CD4-positive, alpha-beta memory T cell (primary cell): ENCODE measurements at regions of chr2 and their contacts with region 1.

Region 1: DNA sequence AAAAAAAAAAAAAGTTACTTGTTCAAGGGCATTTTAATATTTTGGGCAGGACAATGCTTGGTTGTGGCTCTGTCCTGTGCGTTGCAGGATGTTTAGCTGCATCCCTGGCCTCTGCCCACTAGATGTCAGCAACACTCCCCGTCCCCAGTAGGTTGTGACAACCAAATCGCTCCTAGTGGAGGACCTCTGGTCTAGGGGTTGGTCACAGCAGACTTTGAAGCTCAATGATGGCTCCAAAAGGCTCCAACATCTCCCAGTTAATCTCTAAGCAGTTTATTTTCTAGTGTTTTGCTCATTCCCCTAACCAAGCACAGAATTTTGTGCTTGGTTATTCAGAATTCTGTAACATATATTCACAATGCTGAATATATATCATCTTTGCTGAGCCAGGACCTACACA is 67.0 kb downstream of the CHRNA1 start:
- DNase-seq: peak; percentile 44 to 57 (median 54)
- H3K4me3 ChIP-seq: no peak overlapping the region
- H3K4me3 Mint-ChIP-seq: no peak overlapping the region
- H3K27ac ChIP-seq: no peak overlapping the region
- H3K27ac Mint-ChIP-seq: no peak overlapping the region
- H3K4me1 ChIP-seq: no peaks in the 10 kb centered on the region
- H3K4me1 Mint-ChIP-seq: peaks cover 0 to 5% (median 4%) of the 10 kb centered on the region in 4 donors
- H3K27me3 ChIP-seq: no peaks in the 10 kb centered on the region
- H3K27me3 Mint-ChIP-seq: peaks cover 3 to 4% of the 10 kb centered on the region in 2 donors

Region 2: GRCh38 chr2:174577967-174578589 is 119.2 kb before region 1 on chr2:
- CTCF ChIA-PET with region 1: interaction called, 32 read pairs
- POLR2A ChIA-PET with region 1: interaction called, 3 read pairs
- intact Hi-C with region 1: no loop called
- DNase-seq: peak; percentile 63 to 77 (median 67)
- H3K4me3 ChIP-seq: no peak overlapping the region
- H3K4me3 Mint-ChIP-seq: peak overlapping the region in 1 of 8 donors; percentile 3
- H3K27ac ChIP-seq: no peak overlapping the region
- H3K27ac Mint-ChIP-seq: peak overlapping the region; percentile 66 to 88 (median 80)
- H3K4me1 ChIP-seq: peaks cover 93% of the 10 kb centered on the region
- H3K4me1 Mint-ChIP-seq: peaks cover 49 to 93% (median 68%) of the 10 kb centered on the region in 4 donors
- H3K27me3 ChIP-seq: no peaks in the 10 kb centered on the region
- H3K27me3 Mint-ChIP-seq: no peaks in the 10 kb centered on the region

Region 3: DNA sequence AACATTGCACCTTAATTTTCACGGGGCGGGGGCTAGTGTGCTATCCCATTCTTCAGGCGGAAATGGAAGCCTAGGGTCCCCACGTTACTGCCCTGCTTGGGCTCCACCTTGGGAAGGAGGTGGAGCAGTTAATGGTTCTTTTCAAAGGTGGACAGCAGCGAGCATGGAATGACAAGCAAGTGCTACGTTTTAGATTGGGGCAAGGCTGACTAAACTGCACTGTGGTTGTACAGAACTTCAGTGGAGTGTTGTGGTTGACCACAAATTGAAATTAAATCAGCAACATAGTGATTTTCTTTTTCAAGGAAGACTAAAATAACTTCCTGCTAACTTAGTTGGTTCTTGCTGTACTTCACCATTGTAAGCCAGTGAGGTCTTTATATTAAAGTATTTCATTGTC is 20.0 kb after region 1 on chr2:
- CTCF ChIA-PET with region 1: interaction called, 24 read pairs
- POLR2A ChIA-PET with region 1: no interaction called
- intact Hi-C with region 1: no loop called
- DNase-seq: peak in 4 of 5 donors; percentile 51 to 67 (median 59)
- H3K4me3 ChIP-seq: peak overlapping the region in 1 of 2 donors; percentile 16
- H3K4me3 Mint-ChIP-seq: peak overlapping the region; percentile 62 to 94 (median 78)
- H3K27ac ChIP-seq: no peak overlapping the region
- H3K27ac Mint-ChIP-seq: peak overlapping the region; percentile 15 to 92 (median 80)
- H3K4me1 ChIP-seq: peaks cover 31% of the 10 kb centered on the region
- H3K4me1 Mint-ChIP-seq: peaks cover 26 to 35% (median 30%) of the 10 kb centered on the region in 4 donors
- H3K27me3 ChIP-seq: no peaks in the 10 kb centered on the region
- H3K27me3 Mint-ChIP-seq: no peaks in the 10 kb centered on the region

Region 4: GRCh38 chr2:174771631-174772471 is 74.6 kb after region 1 on chr2:
- CTCF ChIA-PET with region 1: interaction called, 23 read pairs
- POLR2A ChIA-PET with region 1: interaction called, 4 read pairs
- intact Hi-C with region 1: no loop called
- DNase-seq: no peak
- H3K4me3 ChIP-seq: no peak overlapping the region
- H3K4me3 Mint-ChIP-seq: peak overlapping the region in 1 of 8 donors; percentile 3
- H3K27ac ChIP-seq: no peak overlapping the region
- H3K27ac Mint-ChIP-seq: peak overlapping the region in 4 of 7 donors; percentile 4 to 82 (median 78)
- H3K4me1 ChIP-seq: peaks cover 13% of the 10 kb centered on the region
- H3K4me1 Mint-ChIP-seq: peaks cover 10 to 23% (median 13%) of the 10 kb centered on the region in 4 donors
- H3K27me3 ChIP-seq: no peaks in the 10 kb centered on the region
- H3K27me3 Mint-ChIP-seq: no peaks in the 10 kb centered on the region

Region 5: GRCh38 chr2:174992886-174993285 is 295.6 kb after region 1 on chr2:
- CTCF ChIA-PET with region 1: interaction called, 104 read pairs
- POLR2A ChIA-PET with region 1: no interaction called
- intact Hi-C with region 1: loop called (anchors 1 kb)
- DNase-seq: no peak
- H3K4me3 ChIP-seq: no peak overlapping the region
- H3K4me3 Mint-ChIP-seq: no peak overlapping the region
- H3K27ac ChIP-seq: no peak overlapping the region
- H3K27ac Mint-ChIP-seq: no peak overlapping the region
- H3K4me1 ChIP-seq: no peaks in the 10 kb centered on the region
- H3K4me1 Mint-ChIP-seq: peaks cover 4 to 8% (median 6%) of the 10 kb centered on the region in 4 donors
- H3K27me3 ChIP-seq: no peaks in the 10 kb centered on the region
- H3K27me3 Mint-ChIP-seq: peaks cover 6 to 11% of the 10 kb centered on the region in 2 donors

Region 6: DNA sequence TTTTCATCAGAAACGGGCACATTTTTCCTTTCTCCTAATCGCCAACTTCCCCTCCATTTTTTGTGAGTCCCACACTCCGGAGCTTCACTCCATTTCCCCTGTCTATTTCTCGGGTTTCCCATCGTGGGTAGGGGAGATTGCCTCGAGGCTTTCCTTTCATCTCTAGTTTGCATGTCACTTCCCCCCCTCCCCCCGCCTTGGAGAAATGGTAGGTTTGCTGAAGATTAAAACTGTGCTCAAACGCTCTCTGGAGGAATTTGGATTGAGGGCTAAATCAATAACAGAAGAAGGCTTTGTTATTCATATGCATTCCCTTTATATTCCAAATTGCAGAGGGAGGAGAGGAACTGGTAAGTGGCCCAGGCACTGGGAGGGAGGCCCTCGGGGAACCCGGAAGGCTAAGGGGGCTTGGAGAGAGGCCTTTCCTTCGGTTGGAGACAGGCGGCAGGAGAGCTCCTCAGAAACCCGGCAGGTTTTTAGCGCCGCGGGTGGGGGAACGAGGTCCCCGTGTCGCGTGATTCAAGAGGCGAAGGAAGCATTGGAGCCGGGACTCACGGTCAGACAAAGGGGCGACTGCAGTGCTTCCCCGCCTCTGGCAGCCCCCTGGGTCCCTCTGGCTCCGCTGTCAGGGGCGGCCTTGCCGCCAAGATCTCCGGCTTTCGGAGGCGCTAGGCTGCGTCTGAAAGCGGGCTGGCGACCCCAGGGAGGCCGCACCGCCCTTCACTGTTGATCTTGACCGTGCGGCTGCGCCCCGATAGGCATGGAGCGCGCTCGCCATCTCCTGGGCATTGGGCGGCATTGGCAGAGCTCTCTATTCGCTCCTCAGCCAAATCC is 1399.9 kb after region 1 on chr2:
- CTCF ChIA-PET with region 1: interaction called, 11 read pairs
- POLR2A ChIA-PET with region 1: no interaction called
- intact Hi-C with region 1: no loop called
- DNase-seq: peak in 4 of 5 donors; percentile 56 to 61 (median 56)
- H3K4me3 ChIP-seq: peak overlapping the region; percentile 1 to 54
- H3K4me3 Mint-ChIP-seq: peak overlapping the region; percentile 51 to 87 (median 82)
- H3K27ac ChIP-seq: no peak overlapping the region
- H3K27ac Mint-ChIP-seq: peak overlapping the region in 3 of 7 donors; percentile 3 to 83 (median 42)
- H3K4me1 ChIP-seq: peaks cover 27% of the 10 kb centered on the region
- H3K4me1 Mint-ChIP-seq: peaks cover 12 to 39% (median 28%) of the 10 kb centered on the region in 4 donors
- H3K27me3 ChIP-seq: peaks cover 78% of the 10 kb centered on the region
- H3K27me3 Mint-ChIP-seq: peaks cover 77 to 78% of the 10 kb centered on the region in 2 donors